Heart left ventricle (tissue), 16 donors: ENCODE measurements at regions of chr9 and their contacts with region 1.

Region 1: GRCh38 chr9:130107234-130107861 is 53.6 kb downstream of the GPR107 start:
- DNase-seq: peak; percentile 69 to 91 (median 79)
- ATAC-seq: peak in 3 of 4 donors; percentile 80 to 87 (median 86)
- H3K4me3 ChIP-seq: no peak overlapping the region
- H3K27ac ChIP-seq: peak overlapping the region in 1 of 12 donors; percentile 73
- H3K4me1 ChIP-seq: peaks cover 0 to 9% (median 0%) of the 10 kb centered on the region in 12 donors
- H3K27me3 ChIP-seq: no peaks in the 10 kb centered on the region
- CTCF ChIP-seq: peak; percentile 69 to 86 (median 80)
- POLR2A ChIP-seq: no peak

Region 2: DNA sequence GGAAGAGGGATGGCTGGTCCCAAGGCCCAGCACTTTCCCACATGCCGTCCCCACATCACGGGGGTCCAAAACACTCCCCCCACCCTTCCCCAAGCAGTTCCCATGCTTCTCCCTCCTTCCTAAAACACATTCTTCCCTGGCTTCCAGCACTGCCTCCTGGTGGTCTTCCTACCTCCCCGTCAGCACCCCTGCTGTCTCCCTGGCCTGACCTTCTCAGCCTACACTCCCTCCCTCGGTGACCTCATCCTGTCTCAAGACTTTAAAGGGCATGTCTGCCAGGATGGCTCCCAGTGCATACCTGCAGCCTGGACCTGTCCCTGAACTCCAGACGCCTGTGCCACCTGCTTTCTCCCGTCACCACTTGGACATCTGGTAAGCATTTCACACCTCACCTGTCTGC is 60.6 kb after region 1 on chr9:
- intact Hi-C with region 1: no loop called
- DNase-seq: no peak
- ATAC-seq: no peak
- H3K4me3 ChIP-seq: no peak overlapping the region
- H3K27ac ChIP-seq: no peak overlapping the region
- H3K4me1 ChIP-seq: peaks cover 0 to 11% (median under 1%) of the 10 kb centered on the region in 12 donors
- H3K27me3 ChIP-seq: peaks cover 0 to 13% (median 0%) of the 10 kb centered on the region in 9 donors
- CTCF ChIP-seq: no peak
- POLR2A ChIP-seq: no peak

Region 3: GRCh38 chr9:130186839-130187522 is 79.6 kb after region 1 on chr9:
- intact Hi-C with region 1: loop called in 1 of 10 experiments (anchors 5 kb)
- DNase-seq: peak in 1 of 5 donors; percentile 59
- ATAC-seq: peak in 3 of 4 donors; percentile 62 to 91 (median 86)
- H3K4me3 ChIP-seq: peak overlapping the region in 4 of 12 donors; percentile 5 to 28 (median 18)
- H3K27ac ChIP-seq: peak overlapping the region in 2 of 12 donors; percentile 45 to 88
- H3K4me1 ChIP-seq: peaks cover 0 to 35% (median 11%) of the 10 kb centered on the region in 12 donors
- H3K27me3 ChIP-seq: no peaks in the 10 kb centered on the region
- CTCF ChIP-seq: no peak
- POLR2A ChIP-seq: no peak

Region 4: DNA sequence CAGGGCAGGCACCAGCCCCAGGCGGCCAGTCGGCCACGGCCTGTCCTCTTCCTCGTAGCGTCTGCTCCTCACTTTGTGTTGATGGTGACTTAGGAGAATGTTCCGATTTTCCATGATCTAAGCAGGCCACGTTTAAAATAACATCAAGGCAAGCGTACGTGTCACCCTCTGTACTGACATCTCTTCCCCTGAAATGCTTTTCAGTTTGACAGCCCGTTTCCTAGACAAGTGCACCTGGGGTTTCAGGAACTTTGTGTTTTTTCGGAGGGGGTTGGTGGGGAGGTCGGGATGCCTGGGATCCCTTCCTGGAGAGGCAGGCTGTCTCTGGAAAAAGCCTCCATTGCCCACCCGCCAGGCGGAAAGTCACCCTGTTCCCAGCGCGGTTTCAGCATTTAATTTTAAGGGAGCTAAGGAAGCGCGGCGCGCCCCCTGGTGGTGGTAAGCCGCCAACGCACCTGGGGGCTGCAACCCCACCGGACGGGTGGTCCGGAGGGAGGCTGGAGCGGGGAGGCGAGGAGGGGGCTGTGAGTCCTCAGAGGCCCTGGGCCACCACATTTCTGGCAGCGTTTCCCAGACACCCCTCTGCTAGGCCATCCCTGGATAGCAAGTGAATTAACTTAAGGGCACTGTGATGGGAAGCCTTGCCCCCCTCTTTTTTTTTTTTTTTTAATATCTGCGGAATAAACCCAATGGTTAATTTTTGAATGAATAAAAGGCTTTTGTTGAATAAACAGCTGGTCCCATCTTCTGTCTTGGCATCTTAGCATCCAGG is 128.7 kb after region 1 on chr9:
- intact Hi-C with region 1: loop called (anchors 1 to 2 kb)
- DNase-seq: peak; percentile 55 to 80 (median 65)
- ATAC-seq: peak; percentile 15 to 59 (median 48)
- H3K4me3 ChIP-seq: peak overlapping the region in 1 of 12 donors; percentile 19
- H3K27ac ChIP-seq: peak overlapping the region in 1 of 12 donors; percentile 80
- H3K4me1 ChIP-seq: peaks cover 0 to 15% (median 1%) of the 10 kb centered on the region in 12 donors
- H3K27me3 ChIP-seq: no peaks in the 10 kb centered on the region
- CTCF ChIP-seq: peak; percentile 96 to 100 (median 99)
- POLR2A ChIP-seq: no peak